Activated T-helper 1 cell treated with anti-CD3 and anti-CD28 coated beads, Interleukin-12 subunit alpha, Interleukin-12 subunit beta, Interleukin-2, Interleukin-4 antibody, amounts not matched to agents 30 ng/mL and 10 ng/mL and 1 ng/mL, durations not matched to agents 14 hours and 24 hours and 36 hours (primary cell): ENCODE measurements at regions of chr16 and their contacts with region 1.

Region 1: DNA sequence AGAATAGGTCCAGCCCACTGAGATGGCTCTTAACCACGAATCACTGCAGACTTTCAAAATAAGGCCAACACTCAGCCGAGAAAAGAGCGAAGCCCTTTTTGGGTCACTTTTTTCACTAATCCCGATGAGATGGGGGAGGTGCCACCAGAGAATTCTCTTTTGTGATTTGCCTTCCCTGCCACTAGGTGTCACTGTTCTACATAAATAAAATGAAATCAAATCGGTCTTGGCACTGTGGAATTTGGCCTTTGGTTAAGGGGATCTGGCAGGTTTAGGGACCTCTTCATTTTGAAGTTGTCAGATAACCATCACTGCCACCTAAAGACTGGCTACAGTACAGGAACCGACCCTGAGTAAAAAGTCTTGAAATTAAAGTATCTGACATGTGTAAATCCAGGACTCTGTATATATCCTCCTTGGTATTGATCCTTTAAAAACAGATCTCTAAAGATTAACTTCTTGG is 147.0 kb downstream of the HS3ST4 start:
- DNase-seq: peak; percentile 8
- H3K4me3 Mint-ChIP-seq: no peak overlapping the region
- H3K27ac Mint-ChIP-seq: no peak overlapping the region
- H3K4me1 Mint-ChIP-seq: peaks cover 8% of the 10 kb centered on the region
- H3K27me3 Mint-ChIP-seq: peaks cover 5% of the 10 kb centered on the region

Region 2: GRCh38 chr16:26569793-26570192 is 731.0 kb after region 1 on chr16:
- intact Hi-C with region 1: loop called (anchors 10 kb)
- DNase-seq: peak; percentile 7
- H3K4me3 Mint-ChIP-seq: no peak overlapping the region
- H3K27ac Mint-ChIP-seq: no peak overlapping the region
- H3K4me1 Mint-ChIP-seq: peaks cover 17% of the 10 kb centered on the region
- H3K27me3 Mint-ChIP-seq: peaks cover 7% of the 10 kb centered on the region

Region 3: GRCh38 chr16:26645614-26646013 is 806.9 kb after region 1 on chr16:
- intact Hi-C with region 1: loop called (anchors 1 kb)
- DNase-seq: peak; percentile 57
- H3K4me3 Mint-ChIP-seq: no peak overlapping the region
- H3K27ac Mint-ChIP-seq: no peak overlapping the region
- H3K4me1 Mint-ChIP-seq: peaks cover 59% of the 10 kb centered on the region
- H3K27me3 Mint-ChIP-seq: peaks cover 2% of the 10 kb centered on the region

Region 4: GRCh38 chr16:26795184-26795583 is 956.4 kb after region 1 on chr16:
- intact Hi-C with region 1: loop called (anchors 2 kb)
- DNase-seq: peak; percentile 14
- H3K4me3 Mint-ChIP-seq: no peak overlapping the region
- H3K27ac Mint-ChIP-seq: no peak overlapping the region
- H3K4me1 Mint-ChIP-seq: peaks cover 14% of the 10 kb centered on the region
- H3K27me3 Mint-ChIP-seq: no peaks in the 10 kb centered on the region

Region 5: GRCh38 chr16:27109666-27110523 is 1271.1 kb after region 1 on chr16:
- intact Hi-C with region 1: loop called (anchors 1 kb)
- DNase-seq: peak; percentile 62
- H3K4me3 Mint-ChIP-seq: peak overlapping the region; percentile 64
- H3K27ac Mint-ChIP-seq: no peak overlapping the region
- H3K4me1 Mint-ChIP-seq: no peaks in the 10 kb centered on the region
- H3K27me3 Mint-ChIP-seq: peaks cover 6% of the 10 kb centered on the region

Region 6: GRCh38 chr16:27455700-27456099 is 1616.9 kb after region 1 on chr16:
- intact Hi-C with region 1: loop called (anchors 5 kb)
- DNase-seq: no peak
- H3K4me3 Mint-ChIP-seq: peak overlapping the region; percentile 24
- H3K27ac Mint-ChIP-seq: peak overlapping the region; percentile 91
- H3K4me1 Mint-ChIP-seq: peaks cover 62% of the 10 kb centered on the region
- H3K27me3 Mint-ChIP-seq: no peaks in the 10 kb centered on the region